Panc1 (cell line): ENCODE measurements at regions of chr14 and their contacts with region 1.

Region 1: DNA sequence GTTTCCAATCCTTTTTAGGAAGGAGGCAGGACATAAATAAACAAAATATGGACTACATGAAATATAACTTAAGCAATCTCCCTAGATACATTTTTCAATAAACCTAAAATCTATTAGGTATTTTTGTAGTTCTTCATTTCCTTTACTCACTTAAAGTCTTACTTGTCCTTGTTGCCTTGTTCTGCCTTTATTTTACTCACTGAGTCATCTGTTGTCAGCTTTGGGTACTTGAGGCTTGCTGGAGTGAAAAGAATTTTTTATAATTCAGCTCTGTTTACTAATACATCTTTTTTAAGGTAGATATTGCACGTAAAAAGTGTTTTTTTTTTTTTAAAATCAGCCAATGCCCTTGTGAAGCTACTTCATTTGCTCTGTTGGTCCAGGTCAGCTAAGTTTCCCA is 216.2 kb downstream of the PELI2 start:
- DNase-seq: no peak
- ATAC-seq: no peak
- H3K4me3 ChIP-seq: no peak overlapping the region
- H3K27ac ChIP-seq: no peak overlapping the region
- H3K4me1 ChIP-seq: no peaks in the 10 kb centered on the region
- H3K27me3 ChIP-seq: no peaks in the 10 kb centered on the region
- CTCF ChIP-seq: no peak

Region 2: DNA sequence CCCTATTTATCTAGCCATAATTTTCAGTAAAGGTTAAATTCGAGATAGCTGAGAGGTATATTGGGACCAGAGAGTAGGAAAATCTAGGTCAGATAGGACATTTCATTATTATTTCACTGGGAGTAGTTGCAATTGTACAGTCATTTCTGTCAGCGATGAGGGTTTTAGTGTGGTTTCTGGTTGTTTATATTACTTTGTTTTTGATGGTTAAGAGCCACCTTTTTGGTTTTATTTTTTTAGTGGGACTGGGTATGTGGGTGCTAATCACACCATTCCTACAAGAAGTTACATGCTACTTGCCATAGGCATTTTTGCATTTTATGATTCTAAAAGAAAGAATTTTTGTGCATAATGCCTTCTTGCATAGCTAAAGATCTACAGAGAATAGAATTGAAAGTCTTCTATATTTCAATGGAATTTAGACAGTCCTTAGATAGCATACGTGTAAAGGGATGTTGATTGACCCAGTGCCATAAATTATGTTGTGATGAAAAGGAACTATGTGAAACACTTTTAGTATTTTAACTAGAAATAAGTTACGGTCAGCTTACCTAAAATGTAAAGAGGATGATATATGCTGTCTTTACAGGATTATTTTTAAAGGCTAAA is 669.3 kb before region 1 on chr14:
- CTCF ChIA-PET with region 1: no interaction called
- POLR2A ChIA-PET with region 1: interaction called, 10 read pairs
- in situ Hi-C with region 1: no loop called
- intact Hi-C with region 1: no loop called
- DNase-seq: no peak
- ATAC-seq: no peak
- H3K4me3 ChIP-seq: no peak overlapping the region
- H3K27ac ChIP-seq: no peak overlapping the region
- H3K4me1 ChIP-seq: no peaks in the 10 kb centered on the region; the same call in 1 of the 2 replicates
- H3K27me3 ChIP-seq: no peaks in the 10 kb centered on the region
- CTCF ChIP-seq: no peak

Region 3: DNA sequence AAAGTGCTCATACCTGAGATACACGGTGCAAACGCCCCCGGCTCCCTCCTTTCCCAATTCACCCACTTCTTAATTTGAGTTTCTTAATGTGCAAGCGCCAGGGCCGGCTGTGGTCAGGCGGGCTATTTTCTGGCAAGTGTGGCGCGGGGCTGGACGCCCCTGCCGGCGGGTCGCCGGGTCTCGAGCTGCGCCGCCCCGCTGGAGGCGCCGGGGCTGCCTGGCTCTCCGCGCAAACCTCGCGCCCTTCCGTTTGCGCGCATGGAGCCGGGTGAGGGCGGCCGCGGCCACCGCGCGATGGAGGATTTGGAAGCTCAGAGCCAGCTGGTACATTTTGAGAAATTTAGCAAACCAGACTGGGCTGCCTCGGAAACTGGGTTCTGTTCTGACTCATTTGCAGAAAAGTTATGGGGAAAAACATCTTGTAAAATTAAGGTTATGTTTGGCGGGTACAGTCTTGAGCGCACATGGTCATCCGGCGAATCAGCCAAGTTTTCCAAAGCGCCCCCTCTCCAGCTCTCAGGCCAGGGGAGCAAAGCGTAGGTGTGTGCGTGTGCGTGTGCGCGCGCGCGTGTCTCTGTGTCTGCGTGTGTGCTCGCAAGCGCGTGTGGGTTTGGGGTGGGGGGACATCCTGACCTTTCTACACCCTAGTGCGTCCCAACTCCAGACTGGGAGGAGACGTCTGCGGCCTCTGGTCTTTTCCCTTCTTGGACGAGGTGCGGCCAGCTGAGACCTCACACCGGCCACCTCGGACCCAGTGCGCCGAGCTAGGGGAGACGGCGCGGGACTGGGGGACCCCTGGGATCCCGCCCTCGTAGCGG is 482.3 kb after region 1 on chr14:
- CTCF ChIA-PET with region 1: no interaction called
- POLR2A ChIA-PET with region 1: no interaction called
- in situ Hi-C with region 1: no loop called
- intact Hi-C with region 1: no loop called
- DNase-seq: no peak
- ATAC-seq: no peak
- H3K4me3 ChIP-seq: no peak overlapping the region
- H3K27ac ChIP-seq: no peak overlapping the region
- H3K4me1 ChIP-seq: no peaks in the 10 kb centered on the region
- H3K27me3 ChIP-seq: peaks cover 26% of the 10 kb centered on the region
- CTCF ChIP-seq: no peak